Adrenal gland (tissue), 19 donors: ENCODE measurements at regions of chr1 and their contacts with region 1.

Region 1: GRCh38 chr1:27116697-27117096 is 38.2 kb downstream of the SLC9A1 start:
- DNase-seq: peak in 2 of 7 donors; percentile 36 to 49
- H3K4me3 ChIP-seq: no peak overlapping the region
- H3K27ac ChIP-seq: peak overlapping the region in 2 of 5 donors; percentile 62 to 76
- H3K4me1 ChIP-seq: peaks cover 33 to 42% of the 10 kb centered on the region in 2 donors
- H3K27me3 ChIP-seq: no peaks in the 10 kb centered on the region
- CTCF ChIP-seq: no peak
- POLR2A ChIP-seq: no peak

Region 2: DNA sequence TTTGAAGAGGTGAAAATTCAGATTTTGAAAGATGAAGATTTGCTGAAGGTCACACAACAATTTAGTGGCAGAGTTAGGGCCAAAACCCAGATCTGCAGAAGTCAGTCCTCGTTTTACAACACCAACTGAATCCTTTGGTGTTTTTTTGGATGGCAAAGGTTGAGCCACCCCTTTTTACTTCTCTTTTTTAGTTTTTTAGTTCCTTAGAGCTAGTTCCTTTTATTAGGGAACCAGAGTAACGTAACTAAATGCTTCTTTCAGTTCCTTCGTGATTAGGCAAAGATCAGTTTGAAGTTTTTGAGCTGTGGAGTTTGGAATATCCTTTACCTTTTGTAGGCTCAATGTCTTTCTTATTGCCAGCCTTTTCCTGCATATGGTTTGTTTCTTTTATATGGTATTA is 488.7 kb before region 1 on chr1:
- intact Hi-C with region 1: no loop called
- DNase-seq: no peak
- H3K4me3 ChIP-seq: no peak overlapping the region
- H3K27ac ChIP-seq: peak overlapping the region in 1 of 5 donors; percentile 45
- H3K4me1 ChIP-seq: peaks cover 0 to 23% of the 10 kb centered on the region in 2 donors
- H3K27me3 ChIP-seq: no peaks in the 10 kb centered on the region
- CTCF ChIP-seq: no peak
- POLR2A ChIP-seq: no peak

Region 3: GRCh38 chr1:26864610-26865527 is 251.8 kb before region 1 on chr1:
- intact Hi-C with region 1: no loop called
- DNase-seq: peak; percentile 97 to 99 (median 98)
- H3K4me3 ChIP-seq: peak overlapping the region in 3 of 4 donors; percentile 18 to 58 (median 56)
- H3K27ac ChIP-seq: peak overlapping the region; percentile 95 to 99 (median 97)
- H3K4me1 ChIP-seq: peaks cover 4 to 5% of the 10 kb centered on the region in 2 donors
- H3K27me3 ChIP-seq: no peaks in the 10 kb centered on the region
- CTCF ChIP-seq: no peak
- POLR2A ChIP-seq: peak; percentile 53 to 88

Region 4: DNA sequence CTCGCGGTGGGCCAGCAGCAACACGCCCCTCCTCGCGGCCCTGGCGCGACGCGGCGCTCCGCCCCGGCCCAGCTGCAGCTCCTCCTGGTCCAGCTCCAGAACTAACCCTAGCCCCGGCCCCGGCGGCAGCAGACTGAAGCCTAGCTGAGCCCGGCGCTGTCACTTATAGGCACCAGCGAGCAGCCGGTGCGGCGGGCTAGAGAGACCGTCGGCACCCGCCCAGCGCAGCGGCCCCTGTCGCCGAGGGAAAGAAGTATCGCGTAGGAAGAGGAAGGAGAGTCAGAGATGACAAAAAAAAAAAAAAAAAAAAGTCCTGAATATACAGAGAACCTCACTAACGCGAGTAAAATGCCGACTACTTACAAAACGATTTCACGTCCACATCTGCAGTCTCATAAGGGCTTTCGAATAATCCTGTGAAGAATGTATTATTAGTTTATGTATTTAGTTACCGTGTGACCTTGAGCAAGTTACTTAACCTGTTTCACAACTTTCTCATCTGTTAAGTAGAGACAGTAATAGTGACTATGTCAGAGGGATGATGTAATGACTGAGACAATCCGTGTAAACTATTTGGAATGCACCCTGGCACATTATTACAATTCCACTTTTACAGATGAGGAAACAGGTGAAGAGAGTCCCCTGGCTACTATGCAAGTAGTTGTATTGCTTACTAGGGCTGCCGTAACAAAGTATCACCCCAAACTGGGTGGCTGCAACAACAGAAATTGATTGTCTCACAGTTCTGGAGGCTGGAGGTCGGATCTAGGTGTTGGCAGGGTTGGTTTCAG is 38.5 kb after region 1 on chr1 and contains the start of gene SLC9A1:
- intact Hi-C with region 1: loop called in 1 of 2 experiments (anchors 5 kb)
- DNase-seq: peak; percentile 93 to 98 (median 96)
- H3K4me3 ChIP-seq: peak within 1 kb of the TSS in 3 of 4 donors; percentile 35 to 78 (median 61)
- H3K27ac ChIP-seq: peak within 1 kb of the TSS in 4 of 5 donors; percentile 75 to 91 (median 84)
- H3K4me1 ChIP-seq: peaks cover 18 to 44% of the 10 kb centered on the region in 2 donors
- H3K27me3 ChIP-seq: no peaks in the 10 kb centered on the region
- CTCF ChIP-seq: peak; percentile 51 to 87 (median 72)
- POLR2A ChIP-seq: peak; percentile 100
- total RNA-seq, gene SLC9A1: 3.1 to 44.0 (median 27.5) TPM